ENCODE measurements at regions of chrX and their contacts with region 1.

Region 1: GRCh38 chrX:19739683-19740082 is 147.7 kb downstream of the SH3KBP1 start:
- DNase-seq: peak; percentile 28
- ATAC-seq: peak; percentile 70; the same call in 1 of the 2 replicates
- H3K4me3 ChIP-seq: no peak overlapping the region
- H3K27ac ChIP-seq: no peak overlapping the region
- H3K4me1 ChIP-seq: no peaks in the 10 kb centered on the region
- H3K27me3 ChIP-seq: no peaks in the 10 kb centered on the region
- CTCF ChIP-seq: peak; percentile 79

Region 2: DNA sequence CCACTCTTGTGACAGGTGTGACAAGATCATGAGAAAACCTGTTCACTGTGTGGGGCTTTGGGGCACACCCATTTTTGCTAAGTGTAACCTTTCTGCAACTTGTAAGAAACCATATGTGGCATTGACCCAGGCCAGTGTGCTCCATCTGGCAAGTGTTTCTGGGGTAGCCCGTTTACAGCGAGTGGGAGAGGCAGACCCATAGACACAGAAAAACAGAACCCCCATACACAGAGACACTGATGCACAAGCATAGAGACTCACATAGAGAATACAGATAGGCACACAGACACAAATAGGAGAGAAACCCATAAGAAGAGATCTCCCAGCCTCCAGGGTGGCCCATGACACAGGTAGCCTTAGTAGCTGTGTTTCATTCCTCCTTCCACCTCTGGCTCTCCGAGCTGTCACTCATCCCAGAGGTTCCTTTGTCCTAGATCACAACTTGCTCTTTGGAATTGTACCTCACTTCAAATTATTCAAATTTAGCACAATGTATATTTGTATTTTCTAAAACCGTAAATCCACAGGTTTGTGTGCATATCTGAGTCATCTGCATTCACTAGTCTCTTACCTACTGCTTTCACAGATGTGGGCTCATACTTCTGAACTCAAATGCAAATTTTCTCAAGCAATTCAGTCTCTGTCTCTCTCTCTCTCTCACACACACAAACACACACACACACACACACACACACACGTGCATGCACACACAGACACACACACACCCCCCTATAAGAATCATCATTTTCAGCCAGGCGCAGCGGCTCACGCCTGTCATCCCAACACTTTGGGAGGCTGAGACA is 33.3 kb after region 1 on chrX:
- CTCF ChIA-PET with region 1: no interaction called
- POLR2A ChIA-PET with region 1: no interaction called
- in situ Hi-C with region 1: no loop called
- intact Hi-C with region 1: no loop called
- DNase-seq: no peak
- ATAC-seq: no peak
- H3K4me3 ChIP-seq: no peak overlapping the region
- H3K27ac ChIP-seq: no peak overlapping the region
- H3K4me1 ChIP-seq: no peaks in the 10 kb centered on the region; the same call in 1 of the 2 replicates
- H3K27me3 ChIP-seq: no peaks in the 10 kb centered on the region
- CTCF ChIP-seq: no peak

Region 3: GRCh38 chrX:19887911-19888879 is 148.5 kb after region 1 on chrX:
- CTCF ChIA-PET with region 1: interaction called, 7 read pairs
- POLR2A ChIA-PET with region 1: no interaction called
- in situ Hi-C with region 1: no loop called
- intact Hi-C with region 1: loop called (anchors 2 kb)
- DNase-seq: no peak
- ATAC-seq: peak; percentile 88
- H3K4me3 ChIP-seq: peak overlapping the region; percentile 54
- H3K27ac ChIP-seq: peak overlapping the region; percentile 70
- H3K4me1 ChIP-seq: no peaks in the 10 kb centered on the region
- H3K27me3 ChIP-seq: no peaks in the 10 kb centered on the region
- CTCF ChIP-seq: peak; percentile 60

Region 4: GRCh38 chrX:19893711-19894110 is 154.0 kb after region 1 on chrX:
- CTCF ChIA-PET with region 1: interaction called, 14 read pairs
- POLR2A ChIA-PET with region 1: no interaction called
- in situ Hi-C with region 1: no loop called
- intact Hi-C with region 1: loop called (anchors 2 kb)
- DNase-seq: no peak
- ATAC-seq: no peak
- H3K4me3 ChIP-seq: no peak overlapping the region
- H3K27ac ChIP-seq: no peak overlapping the region
- H3K4me1 ChIP-seq: no peaks in the 10 kb centered on the region
- H3K27me3 ChIP-seq: no peaks in the 10 kb centered on the region
- CTCF ChIP-seq: no peak

Measured in Panc1 (cell line).